SK-MEL-5 (cell line): ENCODE measurements at regions of chr10 and their contacts with region 1.

Region 1: GRCh38 chr10:101889256-101890210 is 45.9 kb upstream of the KCNIP2 start:
- DNase-seq: peak; percentile 84

Region 2: GRCh38 chr10:101986625-101986973 is 97.1 kb after region 1 on chr10:
- in situ Hi-C with region 1: loop called (anchors 25 kb)
- DNase-seq: no peak

Region 3: GRCh38 chr10:102009801-102010425 is 120.4 kb after region 1 on chr10:
- in situ Hi-C with region 1: no loop called
- DNase-seq: peak; percentile 86

Region 4: GRCh38 chr10:102450194-102450938 is 560.8 kb after region 1 on chr10:
- in situ Hi-C with region 1: no loop called
- DNase-seq: peak; percentile 74